Prostate gland (tissue), 2 donors: ENCODE measurements at regions of chr1 and their contacts with region 1.

Region 1: GRCh38 chr1:223081181-223081994 is 61.7 kb downstream of the TLR5 start:
- DNase-seq: peak; percentile 76
- H3K4me3 ChIP-seq: peak overlapping the region; percentile 14 to 28
- H3K27ac ChIP-seq: peak overlapping the region; percentile 34 to 53
- H3K4me1 ChIP-seq: no peaks in the 10 kb centered on the region
- H3K27me3 ChIP-seq: no peaks in the 10 kb centered on the region
- CTCF ChIP-seq: peak; percentile 87 to 97 (median 95)
- POLR2A ChIP-seq: no peak

Region 2: GRCh38 chr1:222736972-222737371 is 344.4 kb before region 1 on chr1 and contains the start of gene FAM177B:
- intact Hi-C with region 1: loop called (anchors 5 kb)
- DNase-seq: no peak
- H3K4me3 ChIP-seq: no peak within 1 kb of the TSS
- H3K27ac ChIP-seq: peak within 1 kb of the TSS in 1 of 2 donors; percentile 10
- H3K4me1 ChIP-seq: no peaks in the 10 kb centered on the region
- H3K27me3 ChIP-seq: no peaks in the 10 kb centered on the region
- CTCF ChIP-seq: no peak
- POLR2A ChIP-seq: no peak
- total RNA-seq, gene FAM177B: 0.23 to 0.51 TPM

Region 3: GRCh38 chr1:222792744-222793143 is 288.6 kb before region 1 on chr1:
- intact Hi-C with region 1: loop called (anchors 2 kb)
- DNase-seq: no peak
- H3K4me3 ChIP-seq: no peak overlapping the region
- H3K27ac ChIP-seq: no peak overlapping the region
- H3K4me1 ChIP-seq: no peaks in the 10 kb centered on the region
- H3K27me3 ChIP-seq: no peaks in the 10 kb centered on the region
- CTCF ChIP-seq: peak in 3 of 4 experiments; percentile 47 to 75 (median 64)
- POLR2A ChIP-seq: no peak

Region 4: DNA sequence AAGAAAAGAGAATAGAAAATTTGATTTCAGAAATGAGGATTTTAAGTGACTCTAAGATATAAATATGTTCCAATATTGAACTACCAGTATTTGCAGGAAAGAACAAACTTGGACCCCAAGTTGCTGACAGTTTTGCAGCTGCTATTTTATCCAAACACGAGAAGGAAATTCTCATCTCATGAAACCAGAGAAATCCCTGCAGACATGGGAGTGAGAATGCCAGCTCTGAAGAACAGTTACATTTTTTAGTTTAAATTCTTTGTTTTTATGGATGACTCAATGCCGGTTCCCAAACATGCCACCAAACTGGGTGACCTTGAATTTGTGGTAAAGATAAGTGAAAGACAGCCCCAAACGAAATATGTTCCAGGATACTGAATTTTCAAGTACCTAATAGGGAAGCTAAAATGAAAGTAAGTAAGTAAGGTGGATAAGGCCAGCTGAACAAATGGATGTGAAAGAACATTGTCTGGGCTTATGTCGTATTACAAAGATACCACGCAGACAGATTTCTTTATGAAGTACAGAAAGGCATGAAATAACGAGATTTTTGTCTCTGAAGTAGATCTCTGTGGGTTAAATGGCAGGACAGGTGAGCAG is 41.7 kb after region 1 on chr1:
- intact Hi-C with region 1: loop called (anchors 5 kb)
- DNase-seq: no peak
- H3K4me3 ChIP-seq: no peak overlapping the region
- H3K27ac ChIP-seq: no peak overlapping the region
- H3K4me1 ChIP-seq: no peaks in the 10 kb centered on the region
- H3K27me3 ChIP-seq: no peaks in the 10 kb centered on the region
- CTCF ChIP-seq: no peak
- POLR2A ChIP-seq: no peak